IMR-90 (cell line): ENCODE measurements at regions of chr3 and their contacts with region 1.

Region 1: GRCh38 chr3:94115482-94115881 is 52.6 kb downstream of the NSUN3 start:
- DNase-seq: peak; percentile 27
- ATAC-seq: peak; percentile 67
- H3K4me3 ChIP-seq: no peak overlapping the region
- H3K27ac ChIP-seq: no peak overlapping the region
- H3K4me1 ChIP-seq: no peaks in the 10 kb centered on the region
- H3K27me3 ChIP-seq: no peaks in the 10 kb centered on the region
- CTCF ChIP-seq: peak; percentile 41
- POLR2A ChIP-seq: no peak
- RAD21 ChIP-seq: peak; percentile 46

Region 2: DNA sequence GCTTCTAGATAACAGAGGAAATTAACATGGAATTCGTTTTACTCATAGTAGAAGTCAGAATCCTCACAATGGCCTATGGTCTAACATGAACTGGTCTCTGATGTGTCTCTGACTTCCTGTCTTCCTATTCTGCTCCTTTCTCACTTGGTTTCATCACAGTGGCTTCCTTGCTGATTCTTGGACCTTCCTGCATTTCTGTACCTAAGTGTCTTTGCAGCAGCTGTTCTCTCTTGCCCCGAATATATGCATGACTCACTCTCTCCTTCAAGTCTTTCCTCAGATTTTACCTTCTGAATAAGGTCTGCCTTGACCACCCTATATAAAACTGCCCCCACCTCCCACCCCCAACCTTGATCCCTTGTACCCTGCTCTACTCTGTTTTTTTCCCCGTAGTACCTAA is 121.4 kb before region 1 on chr3:
- CTCF ChIA-PET with region 1: interaction called, 10 read pairs
- POLR2A ChIA-PET with region 1: no interaction called
- dilution Hi-C with region 1: no loop called
- in situ Hi-C with region 1: no loop called
- intact Hi-C with region 1: no loop called
- DNase-seq: peak; percentile 15
- ATAC-seq: no peak
- H3K4me3 ChIP-seq: no peak overlapping the region
- H3K27ac ChIP-seq: no peak overlapping the region
- H3K4me1 ChIP-seq: no peaks in the 10 kb centered on the region
- H3K27me3 ChIP-seq: no peaks in the 10 kb centered on the region
- CTCF ChIP-seq: no peak
- POLR2A ChIP-seq: no peak
- RAD21 ChIP-seq: no peak

Region 3: DNA sequence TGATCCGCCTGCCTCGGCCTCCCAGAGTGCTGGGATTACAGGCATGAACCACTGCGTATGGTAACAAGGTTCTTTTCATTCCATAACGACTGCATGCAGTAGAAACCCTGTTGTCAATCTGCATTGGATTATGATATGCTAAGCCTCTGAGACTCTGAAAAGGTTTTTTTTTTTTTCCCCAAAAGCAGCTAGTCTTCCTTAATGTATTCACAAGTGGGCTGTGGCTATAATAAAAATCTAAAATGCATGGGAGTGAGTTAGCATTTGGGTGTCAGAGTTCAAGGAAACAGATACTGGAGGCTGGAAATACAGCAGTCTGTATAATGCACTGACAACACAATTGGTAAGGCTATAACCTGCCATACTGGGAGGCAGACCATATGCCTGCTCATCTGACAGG is 165.5 kb after region 1 on chr3:
- CTCF ChIA-PET with region 1: no interaction called
- POLR2A ChIA-PET with region 1: no interaction called
- dilution Hi-C with region 1: no loop called
- in situ Hi-C with region 1: no loop called
- intact Hi-C with region 1: loop called (anchors 5 kb)
- DNase-seq: no peak
- ATAC-seq: no peak
- H3K4me3 ChIP-seq: no peak overlapping the region
- H3K27ac ChIP-seq: no peak overlapping the region
- H3K4me1 ChIP-seq: no peaks in the 10 kb centered on the region
- H3K27me3 ChIP-seq: no peaks in the 10 kb centered on the region
- CTCF ChIP-seq: no peak
- POLR2A ChIP-seq: no peak
- RAD21 ChIP-seq: no peak